Activated CD8-positive, alpha-beta memory T cell treated with anti-CD3 and anti-CD28 coated beads, Interleukin-2, amount 10 ng/mL, durations not matched to agents 7 days and 5 days (primary cell): ENCODE measurements at regions of chr17 and their contacts with region 1.

Region 1: DNA sequence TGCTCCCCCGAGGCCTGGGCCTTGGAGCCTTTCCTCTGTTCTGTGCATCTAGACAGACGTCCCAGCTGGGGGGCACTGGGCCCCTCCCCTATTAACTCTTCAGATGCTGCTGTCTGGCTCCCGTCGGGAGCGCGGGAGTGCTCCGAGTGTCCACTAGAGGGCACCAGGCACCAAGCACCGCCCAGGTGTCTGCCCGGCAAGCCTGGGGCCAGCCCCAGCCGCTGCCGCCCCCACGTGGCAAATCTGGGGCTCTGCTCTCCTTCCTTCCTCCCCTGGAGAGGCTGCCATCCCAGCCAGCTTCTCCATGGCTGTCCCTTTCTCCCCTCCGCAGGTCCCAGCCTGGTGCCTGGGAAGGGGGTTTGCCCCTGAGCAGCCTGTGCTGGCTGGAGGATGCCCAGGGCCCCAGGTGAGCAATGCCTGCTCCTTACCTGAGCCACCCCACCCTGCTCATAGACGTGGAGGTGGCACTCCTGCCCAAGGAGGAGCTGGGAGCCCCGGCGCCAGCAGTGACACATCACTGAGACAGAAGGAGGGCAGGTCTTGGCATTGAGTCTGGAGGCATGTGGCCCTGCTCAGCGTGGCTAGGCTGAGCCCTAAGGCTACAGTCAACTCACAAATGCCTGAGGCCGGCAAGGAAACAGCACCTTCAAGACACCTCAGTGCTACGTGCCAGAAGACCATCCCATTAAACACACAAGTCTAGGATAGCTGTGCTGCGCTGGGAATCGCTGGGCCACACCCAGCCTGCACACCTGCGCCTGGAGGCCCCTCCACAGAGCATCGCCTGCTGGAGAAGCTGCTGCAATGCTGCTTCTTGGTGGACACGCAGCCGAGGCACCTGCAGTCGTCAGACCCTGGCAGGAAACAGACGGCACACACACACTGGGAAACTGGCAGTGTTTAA is 19.7 kb downstream of the TMEM235 start:
- DNase-seq: peak; percentile 90
- ATAC-seq: peak; percentile 81
- H3K4me3 Mint-ChIP-seq: no peak overlapping the region
- H3K27ac Mint-ChIP-seq: no peak overlapping the region
- H3K4me1 Mint-ChIP-seq: peaks cover 33% of the 10 kb centered on the region
- H3K27me3 Mint-ChIP-seq: peaks cover 12% of the 10 kb centered on the region

Region 2: DNA sequence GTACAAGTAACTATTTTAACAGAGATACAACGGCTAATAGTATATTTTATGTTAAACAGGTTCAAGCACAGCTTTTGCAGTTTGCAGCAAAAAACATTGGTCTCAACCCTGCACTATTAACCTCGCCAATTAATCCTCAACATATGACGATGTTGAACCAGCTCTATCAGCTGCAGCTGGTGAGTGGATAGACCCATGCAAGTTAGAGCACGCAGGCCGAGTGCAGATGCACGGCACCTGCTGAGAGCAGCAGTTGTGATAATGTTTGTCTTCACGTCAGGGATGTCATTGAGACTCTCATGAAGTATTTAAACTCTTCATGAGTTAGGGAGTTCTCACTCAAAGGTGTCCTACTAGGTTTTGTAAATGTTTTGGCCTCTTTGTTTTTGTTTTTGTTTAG is 168.2 kb before region 1 on chr17:
- CTCF ChIA-PET with region 1: interaction called, 37 read pairs
- DNase-seq: no peak
- ATAC-seq: no peak
- H3K4me3 Mint-ChIP-seq: no peak overlapping the region
- H3K27ac Mint-ChIP-seq: no peak overlapping the region
- H3K4me1 Mint-ChIP-seq: peaks cover 12% of the 10 kb centered on the region
- H3K27me3 Mint-ChIP-seq: no peaks in the 10 kb centered on the region

Region 3: GRCh38 chr17:78133971-78134898 is 116.9 kb before region 1 on chr17:
- CTCF ChIA-PET with region 1: interaction called, 16 read pairs
- DNase-seq: peak; percentile 89
- ATAC-seq: peak; percentile 18
- H3K4me3 Mint-ChIP-seq: peak overlapping the region; percentile 72
- H3K27ac Mint-ChIP-seq: peak overlapping the region; percentile 81
- H3K4me1 Mint-ChIP-seq: peaks cover 76% of the 10 kb centered on the region
- H3K27me3 Mint-ChIP-seq: no peaks in the 10 kb centered on the region

Region 4: DNA sequence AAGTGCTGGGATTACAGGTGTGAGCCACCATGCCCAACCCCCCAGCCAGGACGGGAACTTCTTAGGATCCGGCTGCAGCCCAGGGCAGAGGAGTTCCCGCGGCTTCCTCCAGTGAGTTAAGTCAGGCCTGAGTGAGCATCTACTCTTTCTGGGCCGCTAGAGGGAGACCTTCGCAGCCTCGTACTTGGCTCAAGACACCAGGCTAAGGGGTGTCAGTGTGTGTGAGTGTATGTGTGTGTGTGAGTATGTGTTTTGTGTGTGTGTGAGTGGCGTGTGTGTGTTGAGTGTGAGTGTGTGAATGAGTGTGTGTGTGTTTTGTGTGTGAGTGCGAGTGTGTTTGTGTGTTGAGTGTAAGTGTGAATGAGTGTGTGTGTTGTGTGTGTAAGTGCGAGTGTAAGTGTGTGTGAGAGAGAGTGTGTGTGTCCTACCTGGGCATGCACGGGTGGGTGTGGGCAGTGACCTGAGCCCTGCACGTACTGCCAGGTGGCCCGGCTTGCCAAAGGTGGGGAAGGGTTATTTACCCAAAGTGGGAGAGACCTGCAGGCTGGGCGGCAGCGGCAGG is 38.7 kb after region 1 on chr17:
- CTCF ChIA-PET with region 1: interaction called, 17 read pairs
- DNase-seq: peak; percentile 84
- ATAC-seq: peak; percentile 99
- H3K4me3 Mint-ChIP-seq: no peak overlapping the region
- H3K27ac Mint-ChIP-seq: no peak overlapping the region
- H3K4me1 Mint-ChIP-seq: no peaks in the 10 kb centered on the region
- H3K27me3 Mint-ChIP-seq: no peaks in the 10 kb centered on the region

Region 5: DNA sequence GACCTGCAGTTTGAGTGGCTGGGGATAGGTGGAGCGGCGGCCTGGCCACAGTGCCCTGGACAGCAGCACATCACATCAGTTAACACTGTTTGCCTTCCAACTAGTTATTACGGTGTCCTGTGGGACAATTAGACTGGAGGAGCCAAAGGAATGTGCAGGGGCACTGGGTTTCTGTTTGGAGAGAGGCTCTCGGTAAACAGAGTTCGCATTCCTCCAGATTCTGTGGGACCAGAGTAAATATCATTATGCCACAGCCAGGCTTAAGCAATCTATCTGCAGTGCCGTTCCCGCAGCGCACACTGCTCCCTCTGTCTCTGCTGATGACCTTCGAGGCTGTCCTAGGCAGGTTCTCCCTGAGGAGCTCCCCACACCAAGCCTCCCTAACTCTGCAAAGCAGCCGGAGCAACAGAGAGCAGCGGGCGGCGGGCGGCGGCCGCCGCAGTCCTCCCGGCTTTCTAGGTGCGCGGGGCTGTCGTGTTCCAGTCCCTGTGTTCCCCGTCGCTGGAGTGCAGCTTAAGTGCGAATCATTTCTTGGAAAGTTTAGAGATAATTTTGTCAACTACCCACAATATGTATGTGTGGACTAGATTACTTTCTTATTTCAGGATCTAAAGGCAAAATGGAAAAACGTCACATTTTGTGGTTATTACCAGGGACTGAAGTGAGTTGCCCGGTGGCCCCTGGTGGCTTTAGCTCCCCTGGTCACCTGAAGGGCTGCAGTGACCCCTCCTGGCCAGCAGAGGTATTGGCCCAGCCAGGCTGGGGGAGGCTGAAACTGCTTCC is 170.5 kb after region 1 on chr17:
- CTCF ChIA-PET with region 1: interaction called, 30 read pairs
- DNase-seq: peak; percentile 83
- ATAC-seq: peak; percentile 89
- H3K4me3 Mint-ChIP-seq: no peak overlapping the region
- H3K27ac Mint-ChIP-seq: no peak overlapping the region
- H3K4me1 Mint-ChIP-seq: peaks cover 25% of the 10 kb centered on the region
- H3K27me3 Mint-ChIP-seq: no peaks in the 10 kb centered on the region